ENCODE measurements at regions of chr15 and their contacts with region 1.

Region 1: DNA sequence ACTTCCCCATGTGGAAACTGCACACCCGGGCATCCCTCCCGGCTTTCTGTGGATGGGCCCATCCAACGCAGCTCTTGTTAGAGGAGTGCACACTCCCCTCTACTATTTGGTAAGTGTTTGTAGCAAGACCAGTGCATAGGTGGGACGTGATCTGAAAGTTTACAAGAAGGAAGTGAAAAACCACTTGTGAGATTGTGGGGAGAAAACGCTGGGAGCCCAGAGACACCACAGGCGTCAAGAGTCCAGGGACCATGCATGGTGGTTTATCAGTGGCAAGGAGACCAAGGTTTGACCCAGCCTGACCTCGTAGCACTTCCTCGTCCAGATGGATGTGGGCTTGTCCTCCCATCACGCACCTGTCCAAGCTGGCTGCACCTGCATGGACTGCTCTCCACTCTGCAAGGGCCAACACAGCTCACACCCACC is 51.6 kb downstream of the ATP10A start:
- DNase-seq: no peak
- ATAC-seq: no peak
- H3K4me3 ChIP-seq: no peak overlapping the region
- H3K27ac ChIP-seq: no peak overlapping the region
- H3K4me1 ChIP-seq: no peaks in the 10 kb centered on the region
- H3K27me3 ChIP-seq: peaks cover 0 to 2% (median 0%) of the 10 kb centered on the region in 3 donors
- CTCF ChIP-seq: no peak

Region 2: DNA sequence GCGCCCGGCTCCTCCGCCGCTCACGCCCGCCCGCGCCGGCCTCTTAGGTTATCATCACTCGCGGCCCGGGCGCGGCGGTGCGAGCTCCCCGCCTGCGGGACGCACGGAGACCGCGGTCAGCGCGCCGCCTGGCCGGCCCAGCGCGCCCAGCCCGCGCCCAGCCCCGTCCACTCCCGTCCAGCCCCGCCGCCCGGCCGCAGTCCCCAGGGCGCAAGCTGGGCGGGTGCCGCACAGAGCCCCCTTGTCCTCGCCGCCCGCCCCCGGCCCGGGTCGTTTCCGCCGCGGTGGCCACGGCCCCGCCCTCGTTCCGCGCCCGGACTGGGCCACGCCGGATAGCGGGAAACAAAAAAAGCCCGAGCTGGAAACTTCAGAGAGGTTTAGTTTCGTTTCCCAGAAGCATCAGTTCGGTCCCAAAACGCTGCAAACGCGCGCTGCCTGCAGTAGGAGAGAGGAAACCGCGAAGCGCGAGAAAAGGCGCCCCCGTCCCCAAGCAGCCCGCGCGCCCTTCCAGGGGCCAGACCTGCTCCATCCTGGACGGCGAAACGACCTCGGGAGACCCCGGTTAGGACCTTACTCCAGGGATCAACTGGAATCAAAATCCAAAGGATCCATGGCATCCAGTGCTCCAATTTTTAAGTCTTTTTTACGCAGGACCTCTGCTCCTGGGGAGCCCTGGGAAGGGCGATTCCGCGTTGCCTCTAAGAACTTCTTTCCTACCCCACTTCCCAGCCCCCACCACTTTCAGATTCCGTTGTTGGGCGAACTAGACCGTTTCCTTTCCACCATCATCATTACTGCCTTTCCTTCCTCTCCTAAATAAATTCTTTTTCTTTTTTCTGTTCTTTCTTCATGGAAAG is 51.8 kb after region 1 on chr15 and contains the start of gene ATP10A:
- intact Hi-C with region 1: loop called in 1 of 2 experiments (anchors 10 kb)
- DNase-seq: peak; percentile 48 to 58
- ATAC-seq: peak; percentile 16 to 34 (median 21)
- H3K4me3 ChIP-seq: peak within 1 kb of the TSS; percentile 67
- H3K27ac ChIP-seq: no peak within 1 kb of the TSS
- H3K4me1 ChIP-seq: peaks cover 19% of the 10 kb centered on the region
- H3K27me3 ChIP-seq: peaks cover 0 to 15% (median 2%) of the 10 kb centered on the region in 3 donors
- CTCF ChIP-seq: no peak
- total RNA-seq, gene ATP10A: 0.27 to 0.59 (median 0.44) TPM